Psoas muscle (tissue), 8 donors: ENCODE measurements at regions of chr12 and their contacts with region 1.

Region 1: GRCh38 chr12:56521590-56522371 is at the start of gene RBMS2:
- DNase-seq: peak; percentile 73 to 83
- ATAC-seq: peak; percentile 76 to 95 (median 91)
- H3K4me3 ChIP-seq: peak within 1 kb of the TSS; percentile 71
- H3K27ac ChIP-seq: peak within 1 kb of the TSS; percentile 77
- H3K4me1 ChIP-seq: no peaks in the 10 kb centered on the region
- H3K27me3 ChIP-seq: no peaks in the 10 kb centered on the region
- CTCF ChIP-seq: no peak
- total RNA-seq, gene RBMS2: 11.8 to 20.5 (median 14.8) TPM

Region 2: GRCh38 chr12:56630160-56630632 is 108.4 kb after region 1 on chr12 and contains the start of gene BAZ2A:
- intact Hi-C with region 1: loop called in 1 of 2 experiments (anchors 5 kb)
- DNase-seq: peak; percentile 91 to 93
- ATAC-seq: peak; percentile 86 to 88 (median 86)
- H3K4me3 ChIP-seq: peak within 1 kb of the TSS; percentile 82
- H3K27ac ChIP-seq: peak within 1 kb of the TSS; percentile 92
- H3K4me1 ChIP-seq: peaks cover 48% of the 10 kb centered on the region
- H3K27me3 ChIP-seq: no peaks in the 10 kb centered on the region
- CTCF ChIP-seq: no peak
- total RNA-seq, gene BAZ2A: 41.0 to 53.8 (median 47.7) TPM

Region 3: GRCh38 chr12:56636675-56637540 is 115.1 kb after region 1 on chr12:
- intact Hi-C with region 1: loop called (anchors 2 to 5 kb)
- DNase-seq: peak; percentile 99
- ATAC-seq: peak; percentile 80 to 82 (median 81)
- H3K4me3 ChIP-seq: peak overlapping the region; percentile 77
- H3K27ac ChIP-seq: peak overlapping the region; percentile 90
- H3K4me1 ChIP-seq: peaks cover 45% of the 10 kb centered on the region
- H3K27me3 ChIP-seq: no peaks in the 10 kb centered on the region
- CTCF ChIP-seq: peak; percentile 56

Region 4: DNA sequence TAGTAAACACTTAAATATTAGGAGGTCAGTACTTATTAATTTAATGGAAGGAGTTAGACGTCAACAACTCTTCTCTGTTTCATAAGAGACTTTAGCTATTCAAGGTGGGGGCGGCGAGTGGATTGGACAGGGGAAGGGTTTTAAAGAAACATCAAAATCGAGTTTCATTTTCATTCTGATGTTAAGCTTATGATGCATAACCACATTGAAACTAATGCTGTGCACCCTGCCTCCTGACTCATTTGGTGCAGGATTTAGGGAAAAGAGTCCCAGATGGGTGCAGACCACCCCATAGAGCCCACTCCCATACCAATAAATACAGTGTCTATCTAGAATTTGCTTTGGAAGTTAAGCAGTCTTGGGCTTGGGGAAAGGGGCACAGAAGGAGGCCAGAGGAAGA is 477.2 kb after region 1 on chr12:
- intact Hi-C with region 1: loop called (anchors 10 kb)
- DNase-seq: no peak
- ATAC-seq: no peak
- H3K4me3 ChIP-seq: no peak overlapping the region
- H3K27ac ChIP-seq: no peak overlapping the region
- H3K4me1 ChIP-seq: no peaks in the 10 kb centered on the region
- H3K27me3 ChIP-seq: no peaks in the 10 kb centered on the region
- CTCF ChIP-seq: no peak